Mammary epithelial cell (primary cell): ENCODE measurements at regions of chr19 and their contacts with region 1.

Region 1: DNA sequence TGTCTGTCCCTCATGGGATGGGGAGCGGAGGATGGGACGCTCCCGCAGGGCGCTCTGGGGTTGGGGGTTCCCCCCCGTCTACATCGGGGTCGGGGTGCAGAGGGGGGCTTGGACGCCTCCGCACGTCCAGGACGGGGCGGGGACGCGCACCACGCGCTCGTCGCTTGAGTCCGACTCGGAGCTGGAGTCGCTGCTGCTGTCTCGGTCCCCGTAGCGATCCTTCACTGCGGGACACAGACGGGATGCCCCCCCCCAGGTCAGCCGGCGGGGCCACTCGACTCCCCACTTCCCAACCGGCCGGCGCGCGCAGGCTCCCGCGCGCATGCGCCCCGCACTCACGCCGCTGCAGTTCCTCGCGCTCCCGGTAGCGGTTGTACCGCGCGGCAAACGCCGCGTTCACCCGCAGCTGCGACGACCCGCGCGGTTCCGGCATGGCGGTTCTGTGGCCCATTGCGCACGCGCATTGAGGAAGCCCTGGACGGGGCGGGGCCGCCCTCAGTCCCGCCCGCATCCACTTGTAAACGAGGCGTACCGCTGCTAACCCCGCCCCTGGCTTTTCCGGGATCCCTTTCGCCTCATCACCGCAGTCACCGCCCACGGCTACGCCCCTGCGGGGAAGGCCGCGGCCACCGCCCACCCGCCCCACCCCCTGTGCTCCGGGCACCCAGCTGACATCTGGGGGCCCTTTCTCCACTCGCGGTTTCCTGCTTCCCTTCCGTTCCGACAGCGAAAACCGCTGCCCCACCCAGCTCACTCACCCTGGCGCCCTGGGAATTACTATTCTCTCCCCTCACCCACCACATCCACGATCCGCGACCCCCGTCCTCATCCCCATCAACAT is at the start of gene KRI1:
- DNase-seq: peak; percentile 94
- H3K4me3 ChIP-seq: peak within 1 kb of the TSS; percentile 90 to 95 (median 92)
- H3K27ac ChIP-seq: peak within 1 kb of the TSS; percentile 53
- H3K4me1 ChIP-seq: peaks cover 39% of the 10 kb centered on the region
- H3K27me3 ChIP-seq: no peaks in the 10 kb centered on the region
- CTCF ChIP-seq: peak; percentile 16 to 42
- total RNA-seq, gene KRI1: 10.3 to 32.7 TPM

Region 2: DNA sequence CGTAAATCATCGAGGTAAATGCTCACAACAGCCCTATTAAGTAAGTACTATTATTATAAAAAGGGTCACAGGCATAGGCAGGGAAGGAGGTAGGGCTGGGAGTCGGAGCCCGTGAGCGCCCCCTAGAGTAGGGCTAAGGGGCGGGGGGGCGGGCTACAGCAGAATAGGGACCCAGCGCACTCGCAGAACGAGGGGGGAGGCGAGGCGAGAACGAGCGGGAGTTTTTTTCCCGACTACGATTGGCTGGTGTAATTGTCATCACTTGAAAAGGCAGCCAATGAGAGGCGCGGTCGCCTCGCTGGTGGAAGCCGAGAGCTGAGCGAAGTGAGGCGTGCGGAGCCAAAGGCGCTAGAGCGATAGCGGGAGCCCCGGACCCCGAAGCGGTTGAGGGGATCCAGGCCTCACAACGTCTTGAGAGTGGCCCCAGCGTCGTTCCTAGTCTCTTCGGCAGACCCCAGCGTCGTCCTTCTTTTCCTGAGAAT is 86.8 kb before region 1 on chr19:
- CTCF ChIA-PET with region 1: no interaction called
- dilution Hi-C with region 1: no loop called
- in situ Hi-C with region 1: no loop called
- intact Hi-C with region 1: loop called (anchors 2 kb)
- DNase-seq: peak; percentile 82
- H3K4me3 ChIP-seq: peak overlapping the region in 2 of 3 experiments; percentile 27 to 35
- H3K27ac ChIP-seq: no peak overlapping the region
- H3K4me1 ChIP-seq: peaks cover 5% of the 10 kb centered on the region
- H3K27me3 ChIP-seq: no peaks in the 10 kb centered on the region
- CTCF ChIP-seq: peak in 1 of 2 donors; percentile 39

Region 3: GRCh38 chr19:10653715-10654492 is 88.1 kb after region 1 on chr19 and contains the start of gene ILF3:
- CTCF ChIA-PET with region 1: no interaction called
- dilution Hi-C with region 1: no loop called
- in situ Hi-C with region 1: no loop called
- intact Hi-C with region 1: loop called (anchors 5 kb)
- DNase-seq: peak; percentile 100
- H3K4me3 ChIP-seq: peak within 1 kb of the TSS; percentile 87 to 99 (median 98)
- H3K27ac ChIP-seq: peak within 1 kb of the TSS; percentile 97
- H3K4me1 ChIP-seq: peaks cover 8% of the 10 kb centered on the region
- H3K27me3 ChIP-seq: no peaks in the 10 kb centered on the region
- CTCF ChIP-seq: no peak
- total RNA-seq, gene ILF3: 75.5 to 252 TPM